HEK293 (cell line): ENCODE measurements at regions of chr7 and their contacts with region 1.

Region 1: DNA sequence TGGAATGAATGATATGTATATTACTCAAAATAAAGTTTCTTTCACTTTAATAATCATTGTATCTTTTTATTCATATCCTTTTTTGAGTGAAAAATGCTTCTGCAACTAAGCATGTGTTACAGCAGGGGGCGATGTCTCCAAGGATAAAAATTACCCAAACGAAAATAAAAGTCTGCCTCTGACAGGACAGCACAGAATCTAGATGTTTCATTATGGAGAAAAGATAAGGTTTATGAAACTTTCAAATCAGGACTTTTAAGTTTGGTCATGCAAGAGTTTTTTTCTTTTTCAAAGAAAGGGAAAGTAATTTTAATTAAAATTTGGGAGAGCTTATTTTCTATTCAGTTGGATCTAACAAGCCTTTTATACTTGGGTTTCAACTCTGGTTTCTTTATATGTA is 48.4 kb downstream of the TES start:
- H3K4me3 ChIP-seq: no peak overlapping the region
- H3K27ac ChIP-seq: no peak overlapping the region
- H3K4me1 ChIP-seq: no peaks in the 10 kb centered on the region
- CTCF ChIP-seq: 0 out of 2 replicates have a peak, but pooled peaks have one; percentile 44

Region 2: DNA sequence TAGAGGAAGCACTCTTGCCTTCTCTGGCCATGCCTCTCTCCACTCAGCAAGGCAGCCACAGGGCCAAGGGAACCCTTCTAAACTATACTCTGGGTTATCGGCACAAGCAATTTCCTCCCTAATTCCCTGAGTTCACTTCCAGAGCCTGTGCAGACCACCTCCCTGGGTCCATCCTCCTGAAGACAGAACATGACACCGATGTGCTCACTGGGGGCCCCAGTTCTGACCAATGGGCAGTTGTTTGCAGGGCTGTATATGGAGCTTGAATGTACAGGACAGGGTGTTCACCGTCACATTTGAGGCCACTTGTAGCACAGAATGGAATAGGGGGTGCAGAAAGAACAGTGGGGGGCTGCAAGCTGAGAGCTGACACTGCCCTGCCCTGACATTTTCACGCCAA is 305.9 kb before region 1 on chr7:
- CTCF ChIA-PET with region 1: no interaction called
- POLR2A ChIA-PET with region 1: no interaction called
- H3K4me3 ChIP-seq: no peak overlapping the region
- H3K27ac ChIP-seq: no peak overlapping the region
- H3K4me1 ChIP-seq: no peaks in the 10 kb centered on the region
- CTCF ChIP-seq: no peak

Region 3: DNA sequence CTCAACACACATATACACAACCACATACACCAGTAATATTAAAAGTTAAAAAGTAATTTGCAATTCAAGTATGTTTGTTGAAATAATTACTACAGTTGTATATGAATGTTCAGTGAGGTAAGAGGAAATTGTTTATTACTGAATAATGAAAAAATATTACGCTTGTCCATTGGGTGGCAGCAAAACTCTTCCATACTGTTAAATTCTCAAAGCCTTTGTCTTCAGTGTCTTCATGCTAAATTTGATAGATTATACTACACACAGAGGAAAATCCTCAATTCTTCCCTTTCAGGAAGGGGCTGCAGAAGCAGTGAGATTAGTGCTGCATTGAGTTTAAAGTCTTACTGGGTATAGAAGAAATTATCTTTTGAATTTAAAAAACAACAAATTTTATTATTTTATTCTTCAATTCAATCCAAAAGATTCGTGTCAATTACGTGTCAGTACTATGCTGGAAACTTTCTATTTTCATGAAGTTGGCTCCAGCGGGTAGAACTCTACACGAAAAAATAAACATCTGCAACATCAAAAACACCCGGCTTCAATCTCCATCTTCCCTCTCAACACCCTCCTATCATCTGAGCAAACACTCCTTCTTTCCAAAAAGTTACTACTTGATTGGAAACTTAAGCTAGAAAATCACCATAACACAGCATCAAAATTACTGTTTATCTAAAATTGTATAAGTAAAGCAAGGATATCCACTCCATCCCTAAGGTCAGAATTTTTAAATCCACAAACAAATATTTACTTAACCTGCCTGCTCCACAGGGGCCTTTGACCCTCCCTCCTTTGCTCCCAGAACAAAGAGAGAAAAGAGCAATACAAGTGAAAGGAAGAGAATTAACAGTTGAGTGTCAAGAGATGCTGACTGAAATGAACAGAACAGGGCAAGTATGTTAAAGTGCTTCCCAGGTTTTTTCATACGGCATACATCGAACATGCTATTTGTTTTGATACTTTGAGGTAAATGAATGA is 85.4 kb before region 1 on chr7:
- CTCF ChIA-PET with region 1: interaction called, 17 read pairs
- POLR2A ChIA-PET with region 1: no interaction called
- H3K4me3 ChIP-seq: no peak overlapping the region
- H3K27ac ChIP-seq: no peak overlapping the region
- H3K4me1 ChIP-seq: no peaks in the 10 kb centered on the region
- CTCF ChIP-seq: peak; percentile 52; the same call in 1 of the 2 replicates

Region 4: DNA sequence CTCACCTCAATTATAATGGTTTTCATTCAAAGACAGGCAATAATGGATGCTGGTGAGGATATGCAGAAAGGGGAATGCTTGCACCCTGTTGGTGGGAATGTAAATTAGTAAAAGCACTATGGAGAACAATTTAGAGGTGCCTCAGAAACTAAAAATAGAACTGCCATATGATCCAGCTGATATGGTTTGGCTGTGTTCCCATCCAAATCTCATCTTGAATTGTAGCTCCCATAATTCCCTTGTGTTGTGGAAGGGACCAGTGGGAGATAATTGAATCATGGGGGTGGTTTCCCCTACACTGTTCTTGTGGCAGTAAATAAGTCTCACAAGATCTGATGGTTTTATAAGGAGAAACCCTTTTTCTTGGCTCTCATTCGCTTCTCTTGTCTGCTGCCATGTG is 39.3 kb after region 1 on chr7:
- CTCF ChIA-PET with region 1: no interaction called
- POLR2A ChIA-PET with region 1: no interaction called
- H3K4me3 ChIP-seq: no peak overlapping the region
- H3K27ac ChIP-seq: no peak overlapping the region
- H3K4me1 ChIP-seq: no peaks in the 10 kb centered on the region
- CTCF ChIP-seq: no peak

Region 5: DNA sequence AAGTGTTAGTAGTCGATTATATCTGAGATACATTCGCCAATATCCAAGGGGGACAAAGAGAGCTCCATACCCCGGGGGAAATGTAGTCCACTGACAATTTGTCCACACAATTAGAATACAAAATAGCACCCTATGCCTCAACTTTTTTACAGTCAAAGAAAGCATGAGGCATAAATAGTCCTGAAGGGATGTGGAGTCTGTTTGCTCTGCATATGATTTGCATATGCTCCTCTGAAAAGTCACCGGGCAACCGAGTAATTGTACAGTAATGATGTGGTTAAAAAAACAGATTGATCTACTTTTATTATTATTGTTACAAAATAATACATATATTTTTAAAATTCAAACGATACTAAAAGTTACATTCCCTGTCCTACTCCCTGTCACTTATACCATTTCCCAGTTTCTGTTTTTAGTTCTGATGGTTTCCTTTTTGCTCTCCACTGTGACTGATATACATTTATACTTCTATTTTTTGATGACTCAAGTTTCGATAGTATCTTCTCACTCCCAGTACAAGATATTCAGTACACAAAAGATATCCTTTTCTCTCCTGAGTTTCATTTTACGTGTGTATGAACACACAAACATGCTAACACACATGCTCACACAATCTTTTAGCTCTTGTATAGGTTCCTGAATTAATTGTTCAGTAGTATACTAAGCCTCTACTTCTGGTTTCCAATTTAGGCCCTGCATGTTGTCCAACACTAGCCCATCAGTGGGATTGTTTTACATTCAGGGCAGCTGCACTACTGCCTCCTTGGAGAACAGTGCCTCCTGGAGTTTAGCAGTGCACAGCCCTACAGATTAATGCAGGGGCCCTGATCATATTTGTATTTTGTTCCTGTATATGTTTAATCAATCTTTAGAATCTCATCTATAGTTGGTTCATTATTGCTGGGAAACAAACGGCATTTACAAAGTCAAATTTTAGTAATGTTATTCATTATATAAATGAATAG is 82.5 kb after region 1 on chr7:
- CTCF ChIA-PET with region 1: interaction called, 18 read pairs
- POLR2A ChIA-PET with region 1: no interaction called
- H3K4me3 ChIP-seq: no peak overlapping the region
- H3K27ac ChIP-seq: no peak overlapping the region
- H3K4me1 ChIP-seq: 0 out of 2 replicates have a peak, but pooled peaks cover 3% of the 10 kb centered on the region
- CTCF ChIP-seq: no peak

Region 6: GRCh38 chr7:116525913-116526861 is 267.5 kb after region 1 on chr7:
- CTCF ChIA-PET with region 1: interaction called, 36 read pairs
- POLR2A ChIA-PET with region 1: no interaction called
- H3K4me3 ChIP-seq: peak overlapping the region; percentile 59
- H3K27ac ChIP-seq: peak overlapping the region; percentile 93; the same call in 1 of the 2 replicates
- H3K4me1 ChIP-seq: 0 out of 2 replicates have a peak, but pooled peaks cover 4% of the 10 kb centered on the region
- CTCF ChIP-seq: peak; percentile 72

Region 7: DNA sequence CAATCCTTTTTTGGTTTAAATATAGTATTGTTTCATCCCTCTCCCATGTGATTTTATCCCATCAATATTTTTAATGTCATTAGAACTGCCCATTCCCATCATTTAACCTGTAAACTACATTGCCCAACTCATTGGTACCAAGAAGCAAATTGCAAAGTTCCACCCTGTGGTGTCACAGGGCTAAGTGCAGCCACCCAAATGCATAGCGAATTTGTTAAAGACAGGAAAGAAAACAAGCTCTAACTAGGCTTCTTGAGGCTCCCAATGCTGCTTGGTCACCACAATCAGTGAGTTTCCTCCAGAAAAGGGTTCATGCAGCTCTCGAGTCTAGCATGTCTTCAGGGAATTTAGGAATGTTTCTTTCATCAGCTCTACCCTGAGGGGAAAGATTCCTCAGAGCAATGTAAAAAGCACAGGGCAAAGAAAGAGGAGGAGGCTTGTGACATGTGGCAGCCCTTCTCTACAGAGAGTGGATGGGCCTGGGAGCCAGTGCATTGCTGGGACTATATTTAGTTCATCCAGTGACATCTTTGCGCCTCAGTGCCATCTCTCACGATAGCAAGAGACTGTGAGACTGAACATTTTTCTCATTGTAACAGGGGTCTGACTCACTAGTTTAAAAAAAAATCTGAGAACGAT is 324.2 kb after region 1 on chr7:
- CTCF ChIA-PET with region 1: interaction called, 40 read pairs
- POLR2A ChIA-PET with region 1: interaction called, 3 read pairs
- H3K4me3 ChIP-seq: no peak overlapping the region
- H3K27ac ChIP-seq: no peak overlapping the region
- H3K4me1 ChIP-seq: no peaks in the 10 kb centered on the region
- CTCF ChIP-seq: no peak